Activated CD4-positive, alpha-beta memory T cell treated with anti-CD3 and anti-CD28 coated beads for 36 hours (primary cell): ENCODE measurements at regions of chr7 and their contacts with region 1.

Region 1: DNA sequence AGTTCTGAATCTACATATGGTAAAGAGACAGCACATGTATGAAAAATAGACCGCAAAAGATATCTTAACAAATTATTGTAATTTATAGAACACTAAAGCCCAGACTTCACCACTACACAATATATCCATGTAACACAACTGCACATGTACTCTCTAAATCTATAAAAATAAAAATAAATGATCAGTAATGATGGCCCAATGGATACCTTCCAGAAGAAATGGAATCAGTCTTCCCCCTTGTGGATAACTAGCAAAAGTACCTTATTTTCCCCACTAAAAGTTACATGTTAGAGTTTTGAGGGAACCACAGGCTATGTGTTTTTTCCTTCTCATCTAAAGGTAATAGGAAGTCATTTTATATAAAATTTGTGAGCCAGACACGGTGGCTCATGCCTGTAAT is 25.7 kb downstream of the C7orf25 start:
- DNase-seq: no peak
- H3K4me3 Mint-ChIP-seq: no peak overlapping the region
- H3K27ac Mint-ChIP-seq: no peak overlapping the region
- H3K4me1 Mint-ChIP-seq: peaks cover 11% of the 10 kb centered on the region
- H3K27me3 Mint-ChIP-seq: peaks cover 10% of the 10 kb centered on the region

Region 2: GRCh38 chr7:42237162-42237821 is 648.8 kb before region 1 on chr7 and contains the start of gene GLI3:
- CTCF ChIA-PET with region 1: no interaction called
- POLR2A ChIA-PET with region 1: no interaction called
- intact Hi-C with region 1: loop called (anchors 10 kb)
- DNase-seq: peak; percentile 49
- H3K4me3 Mint-ChIP-seq: peak within 1 kb of the TSS; percentile 62
- H3K27ac Mint-ChIP-seq: no peak within 1 kb of the TSS
- H3K4me1 Mint-ChIP-seq: peaks cover 7% of the 10 kb centered on the region
- H3K27me3 Mint-ChIP-seq: peaks cover 56% of the 10 kb centered on the region
- total RNA-seq, gene GLI3: 0.02 TPM in 1 of 2 experiments, not detected in the other

Region 3: DNA sequence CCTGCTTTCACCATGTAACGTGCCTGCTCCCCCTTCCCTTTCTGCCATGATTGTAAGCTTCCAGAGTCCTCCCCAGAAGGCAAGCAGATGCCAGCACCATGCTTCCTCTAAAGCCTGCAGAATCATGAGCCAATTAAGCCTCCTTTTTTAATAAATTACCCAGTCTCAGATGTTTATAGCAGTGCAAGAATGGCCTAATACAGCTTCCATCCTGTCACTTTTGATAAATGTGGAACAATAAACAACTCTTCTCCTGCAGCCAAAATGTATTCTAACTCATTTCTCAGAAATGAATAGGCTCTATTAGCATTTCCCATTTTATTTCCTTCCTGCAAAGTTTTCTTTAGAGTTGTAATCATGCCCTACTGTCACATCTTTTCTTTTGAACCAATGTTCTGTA is 17.6 kb before region 1 on chr7:
- CTCF ChIA-PET with region 1: no interaction called
- POLR2A ChIA-PET with region 1: no interaction called
- intact Hi-C with region 1: no loop called
- DNase-seq: no peak
- H3K4me3 Mint-ChIP-seq: no peak overlapping the region
- H3K27ac Mint-ChIP-seq: no peak overlapping the region
- H3K4me1 Mint-ChIP-seq: peaks cover 24% of the 10 kb centered on the region
- H3K27me3 Mint-ChIP-seq: peaks cover 25% of the 10 kb centered on the region

Region 4: GRCh38 chr7:42911454-42912447 is 25.6 kb after region 1 on chr7 and contains the start of gene C7orf25:
- CTCF ChIA-PET with region 1: interaction called, 8 read pairs
- POLR2A ChIA-PET with region 1: interaction called, 4 read pairs
- intact Hi-C with region 1: loop called (anchors 1 kb)
- DNase-seq: peak; percentile 97
- H3K4me3 Mint-ChIP-seq: peak within 1 kb of the TSS; percentile 94
- H3K27ac Mint-ChIP-seq: peak within 1 kb of the TSS; percentile 79
- H3K4me1 Mint-ChIP-seq: peaks cover 52% of the 10 kb centered on the region
- H3K27me3 Mint-ChIP-seq: no peaks in the 10 kb centered on the region
- total RNA-seq, gene C7orf25: 3.6 to 4.3 TPM

Region 5: DNA sequence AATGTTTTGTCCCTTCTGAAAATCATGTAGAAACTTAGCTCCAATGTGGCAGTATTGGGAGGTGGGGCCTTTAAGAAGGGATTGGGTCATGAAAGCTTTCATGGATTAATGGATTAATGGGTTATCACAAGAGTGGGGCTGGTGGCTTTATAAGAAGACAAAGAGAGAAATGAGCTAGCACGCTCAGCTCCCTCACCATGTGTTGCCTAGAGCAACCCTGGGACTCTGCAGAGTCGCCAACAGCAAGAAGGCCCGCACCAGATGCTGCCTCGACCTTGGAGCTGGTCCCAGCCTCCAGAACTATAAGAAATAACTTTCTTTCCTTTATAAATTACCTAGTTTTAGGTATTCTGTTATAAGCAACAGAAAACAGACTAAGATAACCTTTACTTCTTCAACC is 151.4 kb after region 1 on chr7:
- CTCF ChIA-PET with region 1: no interaction called
- POLR2A ChIA-PET with region 1: no interaction called
- intact Hi-C with region 1: no loop called
- DNase-seq: no peak
- H3K4me3 Mint-ChIP-seq: no peak overlapping the region
- H3K27ac Mint-ChIP-seq: no peak overlapping the region
- H3K4me1 Mint-ChIP-seq: no peaks in the 10 kb centered on the region
- H3K27me3 Mint-ChIP-seq: peaks cover 9% of the 10 kb centered on the region